Ascending aorta (tissue), 2 donors: ENCODE measurements at regions of chr14 and their contacts with region 1.

Region 1: DNA sequence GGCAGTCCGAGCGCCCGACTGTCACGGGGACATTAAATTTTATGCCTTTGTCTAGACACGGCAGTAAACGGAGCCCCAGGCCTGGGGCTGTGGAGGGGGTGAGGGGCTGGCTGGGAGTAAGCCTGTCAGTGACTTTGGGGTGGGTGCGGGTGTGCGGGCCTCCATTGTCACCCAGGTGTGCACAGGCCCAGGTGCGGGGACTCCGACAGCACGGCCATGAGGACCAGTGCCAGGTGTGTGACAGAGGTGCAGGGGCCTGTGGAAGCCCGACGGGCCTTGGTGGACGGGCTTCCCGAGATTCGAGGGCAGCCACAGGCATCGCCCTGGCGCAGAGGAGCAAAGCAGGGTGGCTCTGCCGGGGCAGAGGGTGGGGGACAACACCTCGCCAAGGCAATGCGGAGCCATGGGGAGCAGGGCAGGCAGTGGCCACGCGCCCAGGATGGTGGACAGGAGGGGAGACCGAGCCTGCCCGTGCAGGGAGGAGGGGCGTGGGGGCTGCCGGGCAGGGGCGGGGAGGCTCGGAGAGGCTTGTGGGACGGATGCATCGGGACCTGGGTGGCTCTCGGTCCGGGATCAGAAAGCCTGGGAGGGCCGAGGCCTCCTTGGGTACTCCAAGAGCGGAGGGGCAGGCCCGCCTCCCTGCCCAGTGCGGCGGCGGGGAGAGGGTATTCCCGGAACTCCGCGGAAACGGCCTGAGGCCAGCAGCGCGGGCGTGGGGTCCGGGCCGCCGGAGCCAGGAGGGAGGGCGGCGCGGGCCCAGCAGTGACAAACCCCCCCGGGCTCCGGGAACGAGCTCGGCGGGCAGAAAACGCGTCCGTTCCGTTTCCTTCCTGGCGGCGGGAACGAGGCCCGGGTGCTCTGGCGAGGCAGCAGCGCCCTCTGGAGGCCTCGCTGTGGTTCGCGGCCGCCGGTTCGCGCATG is 1.5 kb downstream of the TMEM121 start:
- DNase-seq: peak in 1 of 2 donors; percentile 87
- H3K4me3 ChIP-seq: peak overlapping the region; percentile 69 to 91
- H3K27ac ChIP-seq: peak overlapping the region in 1 of 2 donors; percentile 53
- H3K4me1 ChIP-seq: peaks cover 12 to 21% of the 10 kb centered on the region in 2 donors
- H3K27me3 ChIP-seq: no peaks in the 10 kb centered on the region
- CTCF ChIP-seq: peak; percentile 83 to 90 (median 90)

Region 2: DNA sequence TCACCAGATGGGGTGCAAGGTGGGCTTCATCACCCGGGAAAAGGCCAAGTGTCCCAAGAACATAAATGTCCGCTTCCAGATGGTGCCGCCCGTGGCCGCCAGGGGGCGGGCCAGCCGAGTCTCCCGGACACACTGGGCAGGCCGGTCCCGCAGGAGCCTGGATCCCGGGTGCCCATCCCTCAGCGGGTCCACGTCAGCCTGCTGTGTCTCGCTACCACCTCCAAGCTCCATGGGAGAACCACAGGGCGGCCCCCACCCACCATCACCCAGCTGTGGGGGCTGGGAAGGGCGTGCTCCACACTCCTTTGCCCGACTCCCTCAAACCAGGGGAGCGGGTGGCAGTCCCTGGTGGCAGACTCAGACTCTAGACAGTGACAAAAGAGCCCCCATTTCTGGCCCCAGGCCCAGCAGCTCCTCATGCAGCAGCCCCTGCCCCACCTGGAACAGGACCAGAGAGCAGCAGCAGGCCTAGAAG is 324.8 kb before region 1 on chr14:
- intact Hi-C with region 1: loop called (anchors 2 kb)
- DNase-seq: peak in 1 of 2 donors; percentile 89
- H3K4me3 ChIP-seq: no peak overlapping the region
- H3K27ac ChIP-seq: no peak overlapping the region
- H3K4me1 ChIP-seq: peaks cover 4 to 26% of the 10 kb centered on the region in 2 donors
- H3K27me3 ChIP-seq: peaks cover 8% of the 10 kb centered on the region
- CTCF ChIP-seq: peak; percentile 81 to 92 (median 87)

Region 3: DNA sequence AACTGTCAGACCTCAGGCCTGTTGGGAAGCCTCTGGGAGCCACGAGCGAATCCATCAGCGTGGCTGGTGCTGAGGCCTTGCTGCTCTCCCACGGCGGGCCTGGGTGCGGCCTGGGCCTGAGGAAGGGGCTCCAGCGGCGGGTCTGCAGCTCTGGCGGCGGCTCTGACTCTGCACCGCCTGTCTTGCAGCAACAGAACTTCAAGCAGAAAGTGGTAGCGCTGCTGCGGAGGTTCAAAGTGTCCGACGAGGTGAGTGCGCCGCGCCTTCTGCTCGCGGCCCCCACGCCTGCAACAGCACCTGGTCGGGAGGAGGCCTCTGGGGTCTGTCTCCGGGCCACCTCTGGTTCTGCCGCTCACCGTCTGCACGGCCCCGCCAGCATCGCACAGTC is 158.3 kb before region 1 on chr14:
- intact Hi-C with region 1: loop called (anchors 1 kb)
- DNase-seq: no peak
- H3K4me3 ChIP-seq: no peak overlapping the region
- H3K27ac ChIP-seq: no peak overlapping the region
- H3K4me1 ChIP-seq: no peaks in the 10 kb centered on the region
- H3K27me3 ChIP-seq: no peaks in the 10 kb centered on the region
- CTCF ChIP-seq: no peak

Region 4: DNA sequence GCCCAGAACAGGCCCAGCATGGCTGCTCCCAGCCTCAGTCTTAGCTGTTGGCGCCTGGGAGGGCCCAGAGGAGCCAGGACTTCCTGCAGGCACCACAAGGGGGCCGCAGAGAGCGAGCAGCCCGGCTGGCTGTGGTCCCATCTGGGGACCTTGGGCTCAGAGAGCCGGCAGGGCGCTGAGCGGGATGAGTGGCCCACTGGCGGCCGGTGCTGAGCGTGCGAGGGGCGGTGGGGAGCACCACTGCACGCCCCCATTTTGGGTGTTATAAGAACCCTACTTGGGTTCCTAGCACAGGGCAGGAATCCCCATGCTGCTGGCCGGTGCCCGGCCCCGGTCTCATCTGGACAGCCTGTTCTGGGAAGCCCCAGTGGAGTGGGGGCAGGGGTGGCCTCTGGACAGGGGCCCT is 79.2 kb before region 1 on chr14:
- intact Hi-C with region 1: loop called (anchors 2 kb)
- DNase-seq: peak in 1 of 2 donors; percentile 85
- H3K4me3 ChIP-seq: no peak overlapping the region
- H3K27ac ChIP-seq: peak overlapping the region; percentile 45 to 49
- H3K4me1 ChIP-seq: peaks cover 3 to 10% of the 10 kb centered on the region in 2 donors
- H3K27me3 ChIP-seq: no peaks in the 10 kb centered on the region
- CTCF ChIP-seq: peak; percentile 92 to 98 (median 94)

Region 5: GRCh38 chr14:105470804-105471610 is 56.9 kb before region 1 on chr14:
- intact Hi-C with region 1: no loop called
- DNase-seq: no peak
- H3K4me3 ChIP-seq: no peak overlapping the region
- H3K27ac ChIP-seq: peak overlapping the region; percentile 86 to 96
- H3K4me1 ChIP-seq: peaks cover 22 to 40% of the 10 kb centered on the region in 2 donors
- H3K27me3 ChIP-seq: no peaks in the 10 kb centered on the region
- CTCF ChIP-seq: no peak